ENCODE measurements at regions of chr14 and their contacts with region 1.

Region 1: GRCh38 chr14:23631702-23632460 is 4.3 kb upstream of the DHRS2 start:
- DNase-seq: peak; percentile 86
- ATAC-seq: peak; percentile 85
- H3K4me3 Mint-ChIP-seq: no peak overlapping the region
- H3K27ac Mint-ChIP-seq: no peak overlapping the region
- H3K4me1 Mint-ChIP-seq: peaks cover 5% of the 10 kb centered on the region
- H3K27me3 Mint-ChIP-seq: peaks cover 3% of the 10 kb centered on the region

Region 2: GRCh38 chr14:23582906-23583760 is 48.7 kb before region 1 on chr14:
- CTCF ChIA-PET with region 1: interaction called, 11 read pairs
- POLR2A ChIA-PET with region 1: no interaction called
- intact Hi-C with region 1: loop called in 1 of 2 experiments (anchors 2 kb)
- DNase-seq: no peak
- ATAC-seq: no peak
- H3K4me3 Mint-ChIP-seq: no peak overlapping the region
- H3K27ac Mint-ChIP-seq: no peak overlapping the region
- H3K4me1 Mint-ChIP-seq: peaks cover 8% of the 10 kb centered on the region
- H3K27me3 Mint-ChIP-seq: peaks cover 41% of the 10 kb centered on the region

Region 3: DNA sequence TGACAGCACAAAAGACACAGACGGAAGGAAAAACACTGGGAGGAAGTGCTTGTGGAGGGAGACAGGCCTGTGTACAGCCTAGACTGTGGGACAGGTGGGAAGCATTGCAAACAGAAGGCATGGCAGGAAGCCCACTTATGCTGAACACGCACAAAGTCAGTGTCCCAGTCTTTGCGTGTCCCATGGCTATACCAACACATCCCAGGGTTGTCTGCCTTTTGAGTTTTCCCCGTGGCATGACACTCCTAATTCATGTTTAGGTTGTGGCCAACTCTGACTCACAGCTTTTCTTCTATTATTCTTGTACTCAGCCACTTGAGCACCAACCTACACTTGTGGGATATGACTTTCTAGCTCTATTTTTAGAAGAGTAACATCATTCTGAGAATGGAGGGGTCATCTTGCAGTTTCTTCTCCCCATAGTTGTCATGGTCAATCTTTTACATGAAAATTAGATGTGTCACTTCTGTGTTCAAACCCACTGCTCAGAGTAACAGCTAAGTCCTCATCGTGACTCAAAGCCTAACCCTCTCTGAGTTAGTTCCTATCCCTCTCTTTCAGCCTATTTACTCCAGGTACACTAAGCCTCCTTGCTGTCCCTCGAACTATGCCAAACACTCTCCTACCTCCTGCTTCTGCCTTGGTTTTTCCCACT is 25.8 kb before region 1 on chr14:
- CTCF ChIA-PET with region 1: interaction called, 31 read pairs
- POLR2A ChIA-PET with region 1: no interaction called
- intact Hi-C with region 1: no loop called
- DNase-seq: peak; percentile 44
- ATAC-seq: peak; percentile 90
- H3K4me3 Mint-ChIP-seq: peak overlapping the region; percentile 2
- H3K27ac Mint-ChIP-seq: peak overlapping the region; percentile 84
- H3K4me1 Mint-ChIP-seq: peaks cover 48% of the 10 kb centered on the region
- H3K27me3 Mint-ChIP-seq: no peaks in the 10 kb centered on the region

Region 4: GRCh38 chr14:23621204-23621931 is 10.5 kb before region 1 on chr14:
- CTCF ChIA-PET with region 1: interaction called, 25 read pairs
- POLR2A ChIA-PET with region 1: no interaction called
- intact Hi-C with region 1: no loop called
- DNase-seq: no peak
- ATAC-seq: no peak
- H3K4me3 Mint-ChIP-seq: no peak overlapping the region
- H3K27ac Mint-ChIP-seq: no peak overlapping the region
- H3K4me1 Mint-ChIP-seq: no peaks in the 10 kb centered on the region
- H3K27me3 Mint-ChIP-seq: peaks cover 4% of the 10 kb centered on the region

Region 5: DNA sequence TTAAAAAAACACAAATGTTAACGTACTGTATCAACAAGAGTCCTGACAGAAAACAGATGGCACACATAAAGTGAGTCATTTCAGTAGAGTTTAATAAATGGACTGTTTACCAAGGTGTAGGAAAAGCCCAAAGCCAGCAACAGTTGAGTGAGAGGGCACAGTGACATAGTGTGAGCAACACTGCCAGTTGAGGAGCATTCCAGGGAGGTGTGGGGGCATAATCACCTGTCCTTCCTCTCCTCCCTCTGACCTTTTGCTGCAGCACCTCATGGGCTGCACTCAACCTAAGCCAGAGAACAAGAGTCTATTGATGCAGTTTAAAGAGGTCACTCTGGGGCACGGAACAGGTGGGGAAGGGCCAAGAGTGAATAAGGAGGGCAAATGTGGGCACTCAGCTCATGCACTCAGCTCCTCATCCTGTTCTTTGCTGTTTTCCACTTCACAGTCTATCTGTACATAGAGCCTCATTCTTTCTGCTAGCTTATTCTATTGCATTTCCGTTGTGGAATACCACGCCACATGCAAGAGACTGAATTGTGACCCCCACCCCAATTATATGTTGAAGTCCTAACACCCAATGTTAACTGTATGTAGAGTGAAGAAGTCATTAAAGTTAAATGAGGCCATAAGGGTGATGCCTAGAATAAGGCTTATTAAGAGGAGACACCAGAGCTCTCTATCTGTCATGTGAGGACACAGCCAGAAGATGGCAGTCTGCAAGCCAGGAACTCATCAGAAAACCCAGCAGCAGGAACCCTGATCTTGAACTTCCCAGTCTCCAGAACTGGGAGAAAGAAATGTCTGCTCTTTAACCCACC is 33.7 kb after region 1 on chr14:
- CTCF ChIA-PET with region 1: interaction called, 12 read pairs
- POLR2A ChIA-PET with region 1: no interaction called
- intact Hi-C with region 1: no loop called
- DNase-seq: peak; percentile 46
- ATAC-seq: no peak
- H3K4me3 Mint-ChIP-seq: no peak overlapping the region
- H3K27ac Mint-ChIP-seq: no peak overlapping the region
- H3K4me1 Mint-ChIP-seq: no peaks in the 10 kb centered on the region
- H3K27me3 Mint-ChIP-seq: peaks cover 1% of the 10 kb centered on the region

Region 6: DNA sequence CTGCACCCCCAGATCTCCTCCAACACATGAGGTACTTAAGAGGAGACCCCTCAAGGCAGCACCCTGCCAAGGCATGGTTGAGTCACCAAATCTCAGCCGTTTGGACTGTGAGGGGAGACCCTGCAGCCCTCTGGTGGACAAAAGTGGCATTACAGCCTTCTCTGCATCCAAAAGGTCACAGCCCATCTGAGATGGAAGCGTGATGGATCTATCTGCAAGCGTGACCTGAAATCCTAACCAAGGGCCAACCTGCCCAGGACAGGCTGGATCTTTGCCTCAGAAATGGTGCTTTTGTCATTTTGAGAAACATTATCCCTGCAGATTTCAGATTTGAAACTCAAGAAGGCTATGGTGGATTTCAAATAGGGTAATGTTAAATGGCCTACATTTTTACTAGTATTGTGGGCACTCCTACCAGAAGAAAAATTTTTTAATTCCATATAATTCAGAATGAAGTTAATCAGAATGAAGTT is 298.0 kb after region 1 on chr14:
- CTCF ChIA-PET with region 1: interaction called, 34 read pairs
- POLR2A ChIA-PET with region 1: no interaction called
- intact Hi-C with region 1: loop called (anchors 1 kb)
- DNase-seq: peak; percentile 91
- ATAC-seq: peak; percentile 91
- H3K4me3 Mint-ChIP-seq: no peak overlapping the region
- H3K27ac Mint-ChIP-seq: no peak overlapping the region
- H3K4me1 Mint-ChIP-seq: no peaks in the 10 kb centered on the region
- H3K27me3 Mint-ChIP-seq: no peaks in the 10 kb centered on the region